ENCODE measurements at regions of chr2 and their contacts with region 1.

Region 1: DNA sequence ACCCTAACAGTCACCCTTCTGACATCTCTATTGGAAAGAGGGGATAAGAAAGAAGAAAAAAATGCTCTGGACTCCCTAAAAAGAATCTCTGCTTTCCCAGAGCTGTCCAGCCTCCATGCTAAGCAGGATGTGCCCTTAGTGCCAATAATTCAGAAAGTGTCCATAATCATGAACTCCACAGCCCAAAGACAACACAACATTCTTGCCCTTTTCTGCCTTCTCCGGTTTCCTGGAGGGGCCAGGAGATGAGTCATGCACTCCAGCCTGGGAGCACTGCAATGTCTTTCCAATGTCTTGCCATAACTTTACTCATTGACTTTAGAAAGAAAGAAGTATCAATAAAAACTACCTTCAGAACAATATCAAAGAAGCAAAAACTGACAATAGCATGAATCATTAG is 44.0 kb downstream of the KLF7 start:
- DNase-seq: no peak
- H3K4me3 Mint-ChIP-seq: no peak overlapping the region
- H3K27ac Mint-ChIP-seq: no peak overlapping the region
- H3K4me1 Mint-ChIP-seq: peaks cover 58% of the 10 kb centered on the region
- H3K27me3 Mint-ChIP-seq: no peaks in the 10 kb centered on the region

Region 2: DNA sequence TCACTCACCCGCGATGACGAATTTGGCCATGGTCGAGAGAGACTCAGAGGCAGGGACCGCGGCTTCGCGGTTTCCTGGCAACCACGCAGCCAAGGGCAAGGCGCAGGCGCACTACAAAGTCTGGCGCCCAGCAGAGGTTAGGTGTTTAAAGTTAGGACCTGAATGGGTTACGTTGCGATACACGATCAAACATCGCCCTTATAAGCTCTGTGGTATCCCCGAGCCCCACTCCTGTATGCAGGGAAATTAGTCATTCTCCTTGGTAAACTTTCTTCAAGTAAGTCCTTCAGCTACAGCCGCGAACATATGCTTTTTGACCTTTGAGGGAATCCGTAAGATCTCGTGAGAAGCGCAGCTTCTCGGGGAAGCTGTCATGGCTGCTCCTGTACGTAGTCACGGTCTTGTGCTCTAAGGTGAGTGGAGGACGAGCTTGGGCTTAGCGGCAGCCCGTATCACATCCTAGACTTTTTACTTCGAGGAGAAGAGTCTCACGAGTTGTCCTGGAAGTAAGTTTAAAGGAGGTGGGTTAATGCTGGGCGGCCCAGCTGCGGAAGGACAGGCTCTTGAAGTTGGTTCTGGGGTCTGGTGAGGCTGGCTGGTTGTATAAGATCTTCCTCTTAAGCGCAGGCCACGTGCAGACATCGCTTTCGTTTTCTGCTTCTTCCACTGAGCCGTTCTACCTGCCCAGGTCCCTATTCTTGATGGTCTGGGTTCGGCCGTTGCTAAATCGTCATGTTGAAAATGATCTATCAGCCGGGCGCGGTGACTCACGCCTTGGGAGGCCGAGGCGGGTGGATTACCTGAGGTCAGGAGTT is 356.3 kb before region 1 on chr2 and contains the starts of genes FASTKD2 and MDH1B:
- CTCF ChIA-PET with region 1: no interaction called
- intact Hi-C with region 1: loop called (anchors 1 kb)
- DNase-seq: peak; percentile 91
- H3K4me3 Mint-ChIP-seq: peak within 1 kb of the TSS; percentile 89
- H3K27ac Mint-ChIP-seq: peak within 1 kb of the TSS; percentile 95
- H3K4me1 Mint-ChIP-seq: peaks cover 35% of the 10 kb centered on the region
- H3K27me3 Mint-ChIP-seq: no peaks in the 10 kb centered on the region
- total RNA-seq, gene FASTKD2: 21.4 to 22.8 TPM
- total RNA-seq, gene MDH1B: 0.86 TPM

Region 3: DNA sequence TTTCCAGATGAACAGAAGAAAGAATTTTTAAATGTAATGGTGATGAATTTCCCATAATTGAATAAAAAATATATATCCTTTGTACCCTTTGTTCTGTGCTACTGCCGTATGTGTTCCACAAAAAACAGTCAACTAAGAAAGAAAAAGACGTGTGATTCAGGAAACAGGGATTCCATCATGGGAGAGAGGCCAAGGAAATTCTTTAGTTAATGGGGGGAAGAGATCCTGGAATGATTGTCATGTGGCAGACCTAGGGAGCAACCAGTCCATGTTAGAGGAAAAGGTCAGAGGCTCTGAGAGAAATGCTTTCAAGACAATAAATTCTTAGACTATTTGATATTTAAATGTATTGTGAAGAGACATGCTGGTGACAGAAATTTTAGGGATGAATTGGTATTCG is 105.9 kb before region 1 on chr2:
- CTCF ChIA-PET with region 1: no interaction called
- intact Hi-C with region 1: no loop called
- DNase-seq: no peak
- H3K4me3 Mint-ChIP-seq: no peak overlapping the region
- H3K27ac Mint-ChIP-seq: no peak overlapping the region
- H3K4me1 Mint-ChIP-seq: no peaks in the 10 kb centered on the region
- H3K27me3 Mint-ChIP-seq: no peaks in the 10 kb centered on the region

Region 4: GRCh38 chr2:207046724-207047123 is 75.1 kb before region 1 on chr2:
- CTCF ChIA-PET with region 1: interaction called, 3 read pairs
- intact Hi-C with region 1: loop called (anchors 1 kb)
- DNase-seq: peak; percentile 59
- H3K4me3 Mint-ChIP-seq: no peak overlapping the region
- H3K27ac Mint-ChIP-seq: peak overlapping the region; percentile 62
- H3K4me1 Mint-ChIP-seq: peaks cover 10% of the 10 kb centered on the region
- H3K27me3 Mint-ChIP-seq: no peaks in the 10 kb centered on the region

Region 5: GRCh38 chr2:207143215-207144172 is 21.7 kb after region 1 on chr2:
- CTCF ChIA-PET with region 1: interaction called, 15 read pairs
- intact Hi-C with region 1: loop called (anchors 1 kb)
- DNase-seq: peak; percentile 78
- H3K4me3 Mint-ChIP-seq: peak overlapping the region; percentile 64
- H3K27ac Mint-ChIP-seq: peak overlapping the region; percentile 92
- H3K4me1 Mint-ChIP-seq: peaks cover 68% of the 10 kb centered on the region
- H3K27me3 Mint-ChIP-seq: no peaks in the 10 kb centered on the region

Region 6: DNA sequence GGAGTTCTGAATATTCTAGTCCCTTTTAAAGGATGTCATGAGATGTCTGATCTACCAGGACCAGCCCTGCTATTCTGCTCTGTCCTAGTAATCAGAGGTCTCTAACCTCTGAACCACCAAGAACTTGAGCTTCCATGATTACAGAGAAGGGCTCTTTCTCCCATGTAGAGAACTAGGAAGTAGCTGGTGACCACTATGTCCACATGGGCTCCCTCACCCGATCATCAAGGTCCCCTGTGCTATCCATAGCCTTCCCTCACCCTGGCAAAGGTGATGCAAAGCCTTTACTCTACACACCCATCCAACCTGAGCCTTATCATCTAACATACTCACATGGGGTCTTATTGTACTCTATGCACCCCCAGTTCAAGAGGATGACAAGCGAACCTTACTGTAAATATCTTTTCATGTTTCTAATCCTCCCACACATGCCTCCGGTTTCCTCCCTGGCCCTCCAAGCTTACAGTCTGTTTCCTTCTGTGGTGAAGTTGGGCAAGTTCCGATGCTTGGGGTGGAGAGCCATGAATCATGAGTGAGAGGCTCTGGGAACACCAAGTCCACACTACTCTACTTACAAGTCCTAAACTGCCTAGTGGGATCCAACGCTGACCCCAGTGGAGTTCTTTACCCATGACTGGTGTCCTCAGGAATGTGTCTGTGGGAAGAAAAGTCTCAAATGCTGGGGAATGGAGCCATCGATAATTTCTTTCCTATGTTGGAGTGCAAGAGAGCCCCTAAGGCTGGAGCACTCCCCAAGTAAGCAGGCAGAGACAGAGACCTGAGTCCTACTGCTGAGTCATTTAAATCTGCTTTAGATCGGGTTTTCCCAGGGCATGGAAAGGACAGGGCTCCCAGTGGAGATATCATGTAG is 117.3 kb after region 1 on chr2:
- CTCF ChIA-PET with region 1: no interaction called
- intact Hi-C with region 1: loop called (anchors 1 kb)
- DNase-seq: peak; percentile 73
- H3K4me3 Mint-ChIP-seq: no peak overlapping the region
- H3K27ac Mint-ChIP-seq: peak overlapping the region; percentile 2
- H3K4me1 Mint-ChIP-seq: peaks cover 30% of the 10 kb centered on the region
- H3K27me3 Mint-ChIP-seq: no peaks in the 10 kb centered on the region

Region 7: DNA sequence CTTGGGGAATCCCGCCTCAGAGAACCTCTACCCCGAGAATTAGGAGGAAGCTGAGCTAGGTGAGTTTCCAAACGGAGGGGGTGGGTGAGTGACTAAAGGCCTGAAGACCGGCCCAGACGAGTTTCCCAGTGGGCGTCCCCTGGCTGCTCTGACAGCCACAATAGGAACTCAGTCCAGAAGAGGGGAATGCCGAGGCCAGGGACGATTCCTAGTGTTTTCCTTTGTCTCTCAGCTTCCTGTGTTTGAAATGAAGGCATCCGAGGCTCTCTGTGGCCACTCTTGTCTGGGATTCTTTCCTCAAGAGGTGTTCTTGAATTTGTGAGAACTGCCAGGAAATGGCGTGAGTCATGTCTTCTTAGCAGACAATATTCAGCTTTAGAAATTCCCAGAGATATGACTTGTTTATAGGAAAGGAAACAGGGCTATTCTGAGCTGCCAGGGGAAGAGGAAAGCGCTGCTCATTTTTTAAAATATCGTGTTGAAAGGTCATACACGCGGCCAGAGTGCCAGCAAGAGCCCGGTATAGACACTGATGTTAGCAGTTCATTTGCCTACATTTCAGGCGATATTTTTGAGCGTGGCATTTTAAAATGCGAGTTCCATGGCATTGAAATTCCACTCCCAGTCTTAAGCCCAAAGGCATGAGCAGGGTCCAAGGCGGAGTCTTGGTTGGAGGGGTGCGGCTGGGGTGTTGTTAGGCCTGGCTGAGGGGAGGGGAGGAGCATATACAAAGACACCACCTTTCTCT is 213.0 kb after region 1 on chr2:
- CTCF ChIA-PET with region 1: no interaction called
- intact Hi-C with region 1: loop called (anchors 1 kb)
- DNase-seq: peak; percentile 63
- H3K4me3 Mint-ChIP-seq: no peak overlapping the region
- H3K27ac Mint-ChIP-seq: peak overlapping the region; percentile 84
- H3K4me1 Mint-ChIP-seq: peaks cover 71% of the 10 kb centered on the region
- H3K27me3 Mint-ChIP-seq: no peaks in the 10 kb centered on the region

Measured in activated naive CD4-positive, alpha-beta T cell treated with anti-CD3 and anti-CD28 coated beads for 36 hours (primary cell).